ENCODE measurements at regions of chr4 and their contacts with region 1.

Region 1: DNA sequence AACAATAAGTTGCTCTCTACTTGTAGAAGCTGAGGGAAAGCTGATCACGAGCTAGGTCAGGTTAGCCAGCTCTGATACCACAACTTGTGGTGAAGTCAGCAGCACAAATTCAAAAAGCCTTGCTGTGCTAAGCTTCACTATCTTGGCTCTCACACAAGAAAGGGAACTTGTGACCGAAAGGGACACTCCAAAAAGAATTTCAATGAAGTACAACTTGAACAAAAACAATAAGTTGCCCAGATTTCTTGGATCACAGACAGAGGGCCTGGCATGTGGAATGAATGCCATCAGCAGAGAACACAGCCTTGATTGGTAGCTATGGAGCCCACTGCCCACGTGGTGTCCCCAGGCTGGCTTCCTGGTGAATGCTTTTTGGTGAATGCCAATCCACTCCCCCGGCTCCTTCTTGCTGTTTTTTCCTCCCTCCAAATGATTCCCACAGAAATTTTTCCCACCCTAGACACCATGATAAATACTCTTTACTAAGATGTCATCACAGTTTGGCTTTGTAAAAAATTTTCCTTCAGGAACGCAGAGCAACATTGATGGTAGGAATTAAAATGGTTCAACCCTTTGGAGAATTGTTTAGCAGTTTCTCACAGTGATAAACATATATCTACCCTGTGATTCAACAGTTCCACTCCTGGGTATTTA is 82.6 kb downstream of the ANXA3 start:
- DNase-seq: no peak
- CTCF ChIP-seq: no peak

Region 2: DNA sequence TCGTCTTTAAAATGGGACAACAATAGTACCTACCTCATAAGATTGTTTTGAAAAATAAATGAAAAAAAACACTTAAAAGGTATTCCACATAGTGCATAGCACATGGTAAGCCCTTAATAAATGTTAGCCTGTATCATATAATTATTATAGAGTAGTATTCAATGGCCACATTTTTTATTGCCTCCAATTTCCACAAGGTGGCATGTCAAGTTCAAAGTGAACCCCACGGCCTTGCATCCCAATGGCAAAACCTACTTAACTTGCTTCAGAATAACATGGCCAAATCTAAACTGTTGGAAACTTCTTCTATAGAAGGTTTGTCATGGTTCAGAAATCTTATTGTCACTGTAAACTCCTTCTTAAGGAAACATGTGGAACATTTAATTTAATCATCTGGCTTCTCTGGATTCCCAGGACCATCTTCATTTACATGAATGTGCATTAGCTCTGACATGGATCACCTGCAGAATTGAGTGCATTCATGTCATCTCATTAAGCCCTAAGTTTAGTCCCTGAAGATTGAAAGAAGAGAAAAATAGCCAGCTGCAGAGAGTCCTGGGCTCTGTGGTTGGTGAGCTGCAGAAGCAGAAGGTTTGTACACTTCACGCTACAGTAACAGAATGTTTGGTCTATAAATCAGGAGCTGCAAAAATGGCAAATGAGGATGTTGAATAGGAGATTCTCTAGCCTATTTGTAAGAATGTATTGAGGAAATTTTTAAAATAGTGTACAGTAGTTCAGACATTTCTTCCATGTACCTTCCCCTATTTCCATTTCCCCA is 21.6 kb before region 1 on chr4:
- CTCF ChIA-PET with region 1: interaction called, 10 read pairs
- POLR2A ChIA-PET with region 1: no interaction called
- DNase-seq: no peak
- CTCF ChIP-seq: peak; percentile 61